ENCODE measurements at regions of chr20 and their contacts with region 1.

Region 1: DNA sequence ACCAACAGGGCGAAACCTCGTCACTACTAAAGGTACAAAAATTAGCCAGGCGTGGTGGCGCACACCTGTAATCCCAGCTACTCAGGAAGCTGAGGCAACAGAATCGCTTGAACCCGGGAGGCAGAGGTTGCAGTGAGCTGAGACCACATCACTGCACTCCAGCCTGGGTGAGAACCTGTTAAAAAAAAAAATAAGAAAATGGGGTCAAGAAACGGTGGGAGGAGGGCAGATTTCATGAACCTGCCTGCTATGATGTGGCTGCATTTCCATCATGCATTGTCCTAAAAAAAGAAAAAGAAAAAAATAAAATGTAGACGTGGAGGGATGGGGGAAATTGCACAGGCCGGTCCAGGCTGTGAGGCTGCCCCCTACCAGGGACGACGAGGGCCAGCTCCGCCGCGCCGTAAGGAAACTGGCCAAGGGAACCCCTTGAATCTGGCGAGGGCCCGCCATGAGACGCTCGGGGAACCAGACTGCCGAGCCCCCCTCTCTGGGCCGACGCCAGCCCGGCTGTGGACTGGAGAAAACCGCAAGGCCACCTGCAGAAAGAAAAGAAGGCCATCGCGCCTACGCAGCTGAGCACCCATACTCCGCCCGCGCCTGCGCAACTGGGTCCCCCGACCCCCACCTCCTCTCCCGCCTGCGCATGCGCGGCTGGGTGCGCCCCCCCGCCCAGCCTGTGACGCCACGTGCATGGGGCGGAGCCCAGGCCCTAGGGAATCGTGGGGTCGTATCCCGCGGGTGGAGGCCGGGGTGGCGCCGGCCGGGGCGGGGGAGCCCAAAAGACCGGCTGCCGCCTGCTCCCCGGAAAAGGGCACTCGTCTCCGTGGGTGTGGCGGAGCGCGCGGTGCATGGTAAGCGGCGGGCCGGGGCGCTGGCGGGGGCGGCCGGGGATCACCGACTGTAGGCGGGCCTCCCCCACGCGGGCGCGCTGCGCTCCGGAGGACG is at the start of gene ENTPD6:
- DNase-seq: peak; percentile 100
- H3K4me3 ChIP-seq: peak within 1 kb of the TSS; percentile 89 to 91
- H3K27ac ChIP-seq: peak within 1 kb of the TSS; percentile 48 to 89; a peak in 3 of 4 replicates
- H3K4me1 ChIP-seq: peaks cover 0 to 38% of the 10 kb centered on the region in 2 experiments; a peak in 3 of 4 replicates
- H3K27me3 ChIP-seq: no peaks in the 10 kb centered on the region
- CTCF ChIP-seq: peak; percentile 43
- EP300 ChIP-seq: no peak; a peak in 1 of 4 replicates
- RAD21 ChIP-seq: no peak
- polyA plus RNA-seq, gene ENTPD6: 76.1 and 78.2 TPM in 2 replicates

Region 2: DNA sequence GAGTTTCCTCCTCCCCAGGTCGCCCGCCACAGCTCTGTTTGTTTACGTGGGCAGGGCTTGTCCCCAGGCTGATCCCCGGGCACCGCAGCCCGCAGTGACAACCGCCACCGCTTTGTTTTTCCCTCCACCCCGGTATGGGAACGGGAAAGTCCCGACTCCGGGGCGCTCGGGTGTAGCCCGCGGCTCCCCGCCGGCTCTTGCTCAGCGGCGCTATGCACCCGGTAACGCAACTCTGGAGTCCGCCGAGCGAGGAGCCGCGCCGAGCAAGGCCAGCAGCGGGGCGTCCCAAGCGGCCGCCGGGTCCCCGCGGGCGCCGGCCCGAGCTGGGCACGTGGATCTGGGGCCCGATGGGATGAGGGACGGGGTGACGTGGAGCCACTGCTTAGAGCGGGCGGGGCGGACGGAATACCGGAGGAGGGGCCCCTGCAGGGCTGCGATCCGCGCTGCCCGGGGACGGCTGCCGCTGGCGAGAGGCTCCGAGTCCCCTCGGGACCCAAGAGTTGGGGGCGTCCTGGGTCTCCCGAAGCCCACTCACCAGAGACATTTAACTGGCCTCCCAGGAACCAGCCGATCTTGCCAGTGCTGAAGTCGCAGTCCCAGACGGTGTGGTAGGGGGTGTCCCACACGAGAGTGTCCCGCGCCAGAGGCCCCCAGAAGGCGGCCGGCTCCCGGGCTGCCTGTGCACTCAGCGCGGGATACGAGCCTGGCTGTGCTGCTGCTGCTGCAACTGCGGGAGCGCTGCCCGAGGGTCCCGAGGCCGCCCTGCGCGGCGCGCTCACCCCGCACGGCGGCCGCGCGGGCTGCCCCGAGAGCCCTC is 137.8 kb before region 1 on chr20:
- CTCF ChIA-PET with region 1: no interaction called
- POLR2A ChIA-PET with region 1: no interaction called
- DNase-seq: peak; percentile 79
- H3K4me3 ChIP-seq: peak overlapping the region; percentile 49 to 59
- H3K27ac ChIP-seq: no peak overlapping the region
- H3K4me1 ChIP-seq: peaks cover 0 to 15% of the 10 kb centered on the region in 2 experiments; a peak in 1 of 4 replicates
- H3K27me3 ChIP-seq: peaks cover 35% of the 10 kb centered on the region
- CTCF ChIP-seq: no peak
- EP300 ChIP-seq: no peak
- RAD21 ChIP-seq: no peak

Region 3: GRCh38 chr20:25247956-25248785 is 52.9 kb after region 1 on chr20 and contains the start of gene PYGB:
- CTCF ChIA-PET with region 1: interaction called, 9 read pairs
- POLR2A ChIA-PET with region 1: interaction called, 14 read pairs
- DNase-seq: peak; percentile 98
- H3K4me3 ChIP-seq: peak within 1 kb of the TSS; percentile 92 to 98
- H3K27ac ChIP-seq: peak within 1 kb of the TSS; percentile 86 to 93
- H3K4me1 ChIP-seq: peaks cover 11 to 47% of the 10 kb centered on the region in 2 experiments
- H3K27me3 ChIP-seq: no peaks in the 10 kb centered on the region
- CTCF ChIP-seq: no peak
- EP300 ChIP-seq: no peak
- RAD21 ChIP-seq: no peak
- polyA plus RNA-seq, gene PYGB: 32.2 and 35.8 TPM in 2 replicates

Measured in SK-N-SH (cell line).